ENCODE measurements at regions of chr6 and their contacts with region 1.

Region 1: DNA sequence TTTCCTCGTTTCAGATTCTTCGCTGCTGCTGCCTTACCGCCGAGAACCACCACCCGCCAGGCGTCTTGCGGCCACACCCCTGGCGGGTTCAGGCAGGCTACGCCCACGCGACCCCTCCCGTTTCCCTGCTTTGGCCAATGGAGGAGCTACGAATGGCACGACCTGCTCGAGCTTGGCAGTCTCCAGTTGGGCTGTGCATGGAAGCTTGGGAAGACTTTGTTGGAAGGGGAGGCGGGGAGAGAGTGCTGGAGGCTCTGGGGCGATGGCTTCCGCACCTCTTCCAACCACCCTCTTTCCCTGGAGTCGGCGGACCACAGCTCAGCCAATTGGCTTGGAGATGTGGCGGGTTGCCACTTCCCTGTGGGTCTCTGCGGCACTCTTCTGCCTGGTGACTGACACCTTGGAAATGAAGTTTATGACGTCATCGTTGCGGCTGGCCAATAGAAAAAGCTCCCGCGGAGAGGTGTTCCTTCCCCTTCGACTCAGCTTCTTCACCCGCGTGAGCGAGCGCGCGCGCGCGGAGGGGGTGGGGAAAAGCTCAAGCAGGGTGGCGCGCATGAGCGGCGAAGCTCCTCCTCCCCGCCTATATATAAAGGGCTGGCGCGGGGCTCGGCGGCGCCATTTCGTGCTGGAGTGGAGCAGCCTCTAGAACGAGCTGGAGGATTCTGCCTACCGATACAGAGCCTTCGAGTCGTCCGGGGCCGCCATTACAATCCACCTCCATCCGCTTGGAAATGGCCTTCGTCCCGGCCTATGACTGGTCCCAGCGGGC is 3.4 kb downstream of the BRD2 start:
- DNase-seq: peak; percentile 99 to 100 (median 100)
- ATAC-seq: peak; percentile 57
- H3K4me3 ChIP-seq: peak overlapping the region; percentile 78 to 98
- H3K4me3 Mint-ChIP-seq: peak overlapping the region; percentile 93
- H3K27ac ChIP-seq: peak overlapping the region; percentile 86 to 97
- H3K27ac Mint-ChIP-seq: peak overlapping the region; percentile 99
- H3K4me1 ChIP-seq: peaks cover 33% of the 10 kb centered on the region
- H3K4me1 Mint-ChIP-seq: peaks cover 47% of the 10 kb centered on the region
- H3K27me3 ChIP-seq: no peaks in the 10 kb centered on the region
- H3K27me3 Mint-ChIP-seq: no peaks in the 10 kb centered on the region
- CTCF ChIP-seq: no peak

Region 2: GRCh38 chr6:32843979-32844838 is 127.6 kb before region 1 on chr6 and contains the start of gene PSMB8:
- CTCF ChIA-PET with region 1: interaction called, 34 read pairs
- POLR2A ChIA-PET with region 1: interaction called, 124 read pairs
- intact Hi-C with region 1: loop called (anchors 1 kb)
- DNase-seq: peak; percentile 96 to 99 (median 99)
- ATAC-seq: peak; percentile 75
- H3K4me3 ChIP-seq: peak within 1 kb of the TSS; percentile 99
- H3K4me3 Mint-ChIP-seq: peak within 1 kb of the TSS; percentile 99
- H3K27ac ChIP-seq: peak within 1 kb of the TSS; percentile 96 to 100
- H3K27ac Mint-ChIP-seq: peak within 1 kb of the TSS; percentile 99
- H3K4me1 ChIP-seq: peaks cover 79% of the 10 kb centered on the region
- H3K4me1 Mint-ChIP-seq: peaks cover 83% of the 10 kb centered on the region
- H3K27me3 ChIP-seq: no peaks in the 10 kb centered on the region
- H3K27me3 Mint-ChIP-seq: no peaks in the 10 kb centered on the region
- CTCF ChIP-seq: no peak
- total RNA-seq, gene PSMB8: 108 to 117 TPM

Region 3: DNA sequence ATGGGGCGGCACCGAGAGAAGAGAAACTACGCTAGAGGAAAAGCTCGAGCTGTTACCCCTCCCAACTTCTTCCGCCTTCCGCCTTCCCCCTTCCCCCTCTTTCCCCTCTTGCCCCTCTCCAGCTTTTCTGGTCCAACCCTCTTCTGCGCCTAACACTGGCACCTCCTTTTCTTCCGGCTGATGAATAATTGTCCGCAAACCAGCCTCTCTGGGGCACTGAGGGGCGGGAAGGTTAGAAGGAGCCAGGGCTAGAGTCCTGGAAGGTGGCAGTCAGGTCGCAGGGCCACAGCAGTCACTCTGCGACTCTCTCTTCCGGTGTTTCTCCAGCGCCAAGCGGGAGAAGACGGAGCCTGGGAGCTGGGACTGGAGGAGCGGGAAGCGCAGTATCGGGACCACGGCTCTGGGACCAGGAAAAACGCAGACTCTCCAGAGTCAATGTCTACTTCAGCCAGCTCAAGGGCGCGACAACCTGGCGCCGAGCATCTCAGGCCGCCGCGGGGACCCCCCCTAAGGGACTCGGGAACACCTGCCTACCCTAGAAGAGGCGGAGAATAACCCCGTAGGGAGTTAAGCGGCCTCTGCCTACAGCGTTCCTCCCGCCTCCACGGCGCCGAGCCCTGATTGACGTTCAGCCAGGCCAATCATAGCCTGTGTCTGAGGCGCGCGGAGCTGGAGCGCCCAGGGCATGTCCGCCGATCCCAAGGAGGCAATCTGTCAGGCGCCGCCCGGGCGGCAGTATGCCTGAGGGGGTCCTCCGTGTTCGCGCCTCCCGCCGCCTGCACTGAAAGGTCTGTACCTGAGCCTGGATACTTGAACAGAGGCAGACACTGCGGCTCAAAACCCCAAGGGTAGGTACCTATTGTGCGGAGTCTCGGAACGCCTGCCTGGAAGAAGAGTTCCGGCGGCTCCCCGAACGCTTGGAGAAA is 77.4 kb before region 1 on chr6:
- CTCF ChIA-PET with region 1: interaction called, 6 read pairs
- POLR2A ChIA-PET with region 1: interaction called, 81 read pairs
- intact Hi-C with region 1: loop called (anchors 1 to 5 kb)
- DNase-seq: peak; percentile 88 to 98 (median 95)
- ATAC-seq: peak; percentile 96
- H3K4me3 ChIP-seq: peak overlapping the region; percentile 89 to 92
- H3K4me3 Mint-ChIP-seq: peak overlapping the region; percentile 99
- H3K27ac ChIP-seq: peak overlapping the region; percentile 62 to 89
- H3K27ac Mint-ChIP-seq: peak overlapping the region; percentile 97
- H3K4me1 ChIP-seq: peaks cover 20% of the 10 kb centered on the region
- H3K4me1 Mint-ChIP-seq: peaks cover 46% of the 10 kb centered on the region
- H3K27me3 ChIP-seq: no peaks in the 10 kb centered on the region
- H3K27me3 Mint-ChIP-seq: no peaks in the 10 kb centered on the region
- CTCF ChIP-seq: no peak

Region 4: DNA sequence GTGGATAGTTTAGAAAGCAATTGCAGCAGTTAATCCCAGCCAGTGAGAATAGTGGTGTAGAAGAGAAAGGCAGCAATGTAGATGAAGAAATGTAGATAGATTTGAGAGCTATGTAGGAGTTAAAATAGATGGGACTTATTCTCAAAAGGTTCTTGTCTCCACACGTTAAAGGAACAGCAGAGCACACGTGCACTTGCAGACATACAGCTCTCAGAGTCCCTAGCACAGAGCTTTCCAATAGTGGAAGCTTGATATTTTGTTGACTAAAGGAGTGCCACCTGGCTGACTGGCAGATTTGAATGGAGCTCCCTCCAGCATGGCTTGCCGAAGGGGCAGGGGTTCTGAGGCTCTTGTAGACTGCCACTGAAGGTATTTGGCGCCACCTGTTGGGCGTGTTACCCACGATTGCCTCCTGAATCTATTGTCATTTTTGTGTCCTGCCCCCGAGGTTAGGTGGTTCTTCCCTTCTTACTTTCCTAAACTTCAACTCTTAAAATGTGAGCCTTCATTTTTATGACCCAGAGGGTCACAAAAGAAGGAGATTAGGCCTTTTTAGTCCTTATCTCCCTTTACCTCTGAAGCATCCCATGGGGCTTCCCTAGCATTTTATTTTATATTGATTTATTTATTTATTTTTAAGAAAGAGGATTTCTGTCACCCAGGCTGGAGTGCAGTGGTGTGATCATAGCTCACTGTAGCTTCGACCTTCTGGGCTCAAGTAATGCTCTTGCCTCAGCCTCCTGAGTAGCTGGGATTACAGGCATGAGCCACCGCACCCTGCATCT is 13.0 kb after region 1 on chr6:
- CTCF ChIA-PET with region 1: interaction called, 202 read pairs
- POLR2A ChIA-PET with region 1: interaction called, 229 read pairs
- intact Hi-C with region 1: loop called in 1 of 2 experiments (anchors 1 kb)
- DNase-seq: peak; percentile 82 to 94 (median 91)
- ATAC-seq: peak; percentile 96
- H3K4me3 ChIP-seq: no peak overlapping the region
- H3K4me3 Mint-ChIP-seq: no peak overlapping the region
- H3K27ac ChIP-seq: peak overlapping the region in 1 of 2 experiments; percentile 44
- H3K27ac Mint-ChIP-seq: no peak overlapping the region
- H3K4me1 ChIP-seq: peaks cover 5% of the 10 kb centered on the region
- H3K4me1 Mint-ChIP-seq: peaks cover 20% of the 10 kb centered on the region
- H3K27me3 ChIP-seq: no peaks in the 10 kb centered on the region
- H3K27me3 Mint-ChIP-seq: no peaks in the 10 kb centered on the region
- CTCF ChIP-seq: peak; percentile 87

Region 5: DNA sequence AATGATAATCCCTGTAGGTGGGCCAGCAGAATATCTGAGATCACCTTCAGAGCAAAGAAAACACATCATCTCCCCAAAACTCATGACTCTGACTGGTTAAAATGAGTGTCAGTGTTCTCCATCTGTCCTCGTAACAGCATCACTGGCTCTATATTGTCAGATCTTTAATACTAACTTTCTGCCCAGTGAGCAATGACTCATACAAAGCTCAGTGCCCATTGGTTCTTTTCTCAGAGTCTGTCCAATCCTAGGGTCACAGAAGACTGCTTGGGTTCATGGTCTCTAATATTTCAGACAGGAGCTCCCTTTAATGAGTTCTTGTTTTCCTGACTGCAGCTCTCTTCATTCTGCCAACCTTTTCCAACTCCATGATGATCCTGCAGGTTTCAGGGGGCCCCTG is 140.4 kb after region 1 on chr6:
- CTCF ChIA-PET with region 1: no interaction called
- POLR2A ChIA-PET with region 1: no interaction called
- intact Hi-C with region 1: no loop called
- DNase-seq: peak in 3 of 9 experiments; percentile 22 to 75 (median 66)
- ATAC-seq: peak; percentile 98
- H3K4me3 ChIP-seq: no peak overlapping the region
- H3K4me3 Mint-ChIP-seq: no peak overlapping the region
- H3K27ac ChIP-seq: no peak overlapping the region
- H3K27ac Mint-ChIP-seq: no peak overlapping the region
- H3K4me1 ChIP-seq: no peaks in the 10 kb centered on the region
- H3K4me1 Mint-ChIP-seq: peaks cover 7% of the 10 kb centered on the region
- H3K27me3 ChIP-seq: peaks cover 13 to 18% of the 10 kb centered on the region in 2 experiments
- H3K27me3 Mint-ChIP-seq: peaks cover 67% of the 10 kb centered on the region
- CTCF ChIP-seq: no peak

Region 6: GRCh38 chr6:33317669-33318425 is 346.1 kb after region 1 on chr6 and contains the start of gene ZBTB22:
- CTCF ChIA-PET with region 1: no interaction called
- POLR2A ChIA-PET with region 1: interaction called, 10 read pairs
- intact Hi-C with region 1: loop called in 1 of 2 experiments (anchors 5 kb)
- DNase-seq: peak; percentile 91 to 98 (median 96)
- ATAC-seq: peak; percentile 61
- H3K4me3 ChIP-seq: peak within 1 kb of the TSS; percentile 72 to 78
- H3K4me3 Mint-ChIP-seq: peak within 1 kb of the TSS; percentile 99
- H3K27ac ChIP-seq: peak within 1 kb of the TSS; percentile 60 to 99
- H3K27ac Mint-ChIP-seq: peak within 1 kb of the TSS; percentile 97
- H3K4me1 ChIP-seq: peaks cover 65% of the 10 kb centered on the region
- H3K4me1 Mint-ChIP-seq: peaks cover 77% of the 10 kb centered on the region
- H3K27me3 ChIP-seq: no peaks in the 10 kb centered on the region
- H3K27me3 Mint-ChIP-seq: no peaks in the 10 kb centered on the region
- CTCF ChIP-seq: no peak
- total RNA-seq, gene ZBTB22: 8.8 to 9.3 TPM